HepG2 (cell line): ENCODE measurements at regions of chr1 and their contacts with region 1.

Region 1: GRCh38 chr1:161201828-161202725 is at the start of gene NDUFS2:
- DNase-seq: peak; percentile 97
- ATAC-seq: peak; percentile 86
- H3K4me3 ChIP-seq: peak within 1 kb of the TSS; percentile 73 to 85 (median 80)
- H3K27ac ChIP-seq: peak within 1 kb of the TSS; percentile 70
- H3K4me1 ChIP-seq: peaks cover 78% of the 10 kb centered on the region
- H3K27me3 ChIP-seq: no peaks in the 10 kb centered on the region; a peak in 1 of 5 replicates
- CTCF ChIP-seq: no peak; the same call in none of the 2 replicates
- EP300 ChIP-seq: no peak
- POLR2A ChIP-seq: peak; percentile 80 to 85
- RAD21 ChIP-seq: 0 out of 2 replicates have a peak, but pooled peaks have one; percentile 30
- total RNA-seq, gene NDUFS2: 118 and 129 TPM in 2 replicates

Region 2: DNA sequence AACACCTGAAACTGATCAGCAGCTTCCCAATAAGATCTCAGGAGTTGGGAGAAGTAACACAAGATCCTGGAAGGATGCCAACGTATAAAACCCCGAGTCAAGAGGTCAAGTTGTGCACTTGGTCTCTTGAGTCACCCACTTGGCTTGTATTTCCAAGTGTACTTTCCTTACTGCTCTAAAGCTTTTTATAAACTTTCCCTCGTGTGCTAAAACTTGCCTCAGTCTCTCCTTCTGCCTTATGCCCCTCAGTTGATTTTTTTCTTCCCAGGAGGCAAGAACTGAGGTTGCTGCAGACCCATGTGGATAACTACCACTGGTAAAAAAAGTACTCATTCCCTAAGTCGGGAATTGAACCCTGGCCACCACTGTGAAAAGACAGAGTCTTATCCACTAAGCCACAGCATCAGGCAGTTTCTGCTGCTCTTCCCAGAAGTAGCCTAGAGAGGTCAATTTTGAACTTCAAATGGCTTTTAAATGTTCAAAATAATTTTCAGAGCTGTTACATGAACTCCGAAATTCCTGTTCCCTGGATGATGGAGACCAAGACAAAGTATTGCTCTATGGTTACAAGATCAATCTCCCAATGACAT is 276.3 kb before region 1 on chr1:
- CTCF ChIA-PET with region 1: no interaction called
- POLR2A ChIA-PET with region 1: no interaction called
- in situ Hi-C with region 1: no loop called
- intact Hi-C with region 1: no loop called
- DNase-seq: no peak
- ATAC-seq: no peak
- H3K4me3 ChIP-seq: no peak overlapping the region
- H3K27ac ChIP-seq: no peak overlapping the region
- H3K4me1 ChIP-seq: no peaks in the 10 kb centered on the region
- H3K27me3 ChIP-seq: no peaks in the 10 kb centered on the region
- CTCF ChIP-seq: no peak
- EP300 ChIP-seq: no peak
- POLR2A ChIP-seq: no peak
- RAD21 ChIP-seq: no peak

Region 3: DNA sequence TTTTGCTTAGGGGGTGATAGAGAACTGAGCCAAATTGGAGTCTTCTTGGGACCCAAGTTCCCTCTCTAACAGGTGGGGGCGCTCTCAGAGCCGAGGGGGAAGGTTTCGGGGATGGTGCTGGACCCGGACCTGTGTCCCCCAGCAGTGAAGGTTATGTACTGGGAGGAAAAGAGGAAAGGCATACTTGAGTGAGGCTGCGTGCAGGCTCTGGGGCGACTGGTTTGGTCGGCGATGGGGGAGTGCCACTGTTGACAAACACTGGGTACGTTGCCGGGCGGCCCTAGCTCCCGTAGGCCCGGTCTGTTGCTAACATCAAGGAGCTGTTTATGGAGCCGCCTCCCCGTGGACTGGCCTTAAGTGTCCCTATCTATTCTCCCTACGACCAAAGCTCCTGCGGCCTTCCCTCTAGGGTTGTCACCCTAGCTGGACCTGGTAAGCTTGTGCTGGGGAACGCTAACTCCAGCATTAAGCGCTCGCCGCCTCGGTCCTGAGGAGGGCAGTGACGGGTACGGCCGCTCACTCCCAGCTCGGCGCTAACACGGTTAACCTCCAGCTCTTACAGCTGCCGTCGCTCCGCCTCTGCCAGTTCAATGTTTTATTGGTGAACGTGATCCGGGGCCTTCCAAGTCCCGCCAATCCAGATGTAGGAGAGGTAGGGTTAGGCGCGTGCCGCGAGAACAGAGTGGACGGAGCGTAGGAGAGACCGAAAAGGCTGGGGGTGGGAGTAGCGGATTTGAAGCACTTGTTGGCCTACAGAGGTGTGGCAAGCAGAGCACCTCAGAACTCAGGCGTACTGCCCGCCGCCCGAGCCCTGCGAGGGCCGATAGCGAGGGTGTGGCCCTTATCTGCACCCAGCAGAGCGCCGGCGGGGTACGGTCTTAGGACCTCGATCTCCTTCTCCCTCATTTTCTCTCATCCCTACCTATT is 36.1 kb before region 1 on chr1 and contains the start of gene PPOX:
- CTCF ChIA-PET with region 1: no interaction called
- POLR2A ChIA-PET with region 1: interaction called, 15 read pairs
- in situ Hi-C with region 1: no loop called
- intact Hi-C with region 1: no loop called
- DNase-seq: peak; percentile 97
- ATAC-seq: peak; percentile 96
- H3K4me3 ChIP-seq: peak within 1 kb of the TSS; percentile 71 to 88 (median 74)
- H3K27ac ChIP-seq: peak within 1 kb of the TSS; percentile 62
- H3K4me1 ChIP-seq: peaks cover 25% of the 10 kb centered on the region
- H3K27me3 ChIP-seq: no peaks in the 10 kb centered on the region
- CTCF ChIP-seq: peak; percentile 61
- EP300 ChIP-seq: 0 out of 4 replicates have a peak, but pooled peaks of 1 of the 2 experiments have one; percentile 10
- POLR2A ChIP-seq: peak; percentile 69 to 79
- RAD21 ChIP-seq: no peak
- total RNA-seq, gene PPOX: 13.0 and 15.5 TPM in 2 replicates

Region 4: GRCh38 chr1:161216945-161217712 is 15.1 kb after region 1 on chr1:
- CTCF ChIA-PET with region 1: no interaction called
- POLR2A ChIA-PET with region 1: interaction called, 357 read pairs
- in situ Hi-C with region 1: no loop called
- intact Hi-C with region 1: no loop called
- DNase-seq: peak; percentile 59
- ATAC-seq: peak; percentile 17
- H3K4me3 ChIP-seq: peak overlapping the region in 2 of 3 experiments; percentile 31 to 63; a peak in 3 of 6 replicates
- H3K27ac ChIP-seq: peak overlapping the region; percentile 99
- H3K4me1 ChIP-seq: peaks cover 65% of the 10 kb centered on the region
- H3K27me3 ChIP-seq: no peaks in the 10 kb centered on the region; a peak in 1 of 5 replicates
- CTCF ChIP-seq: no peak
- EP300 ChIP-seq: 0 out of 4 replicates have a peak, but pooled peaks of 1 of the 2 experiments have one; percentile 16
- POLR2A ChIP-seq: peak in 1 of 2 experiments; percentile 14; a peak in 2 of 4 replicates
- RAD21 ChIP-seq: no peak

Region 5: DNA sequence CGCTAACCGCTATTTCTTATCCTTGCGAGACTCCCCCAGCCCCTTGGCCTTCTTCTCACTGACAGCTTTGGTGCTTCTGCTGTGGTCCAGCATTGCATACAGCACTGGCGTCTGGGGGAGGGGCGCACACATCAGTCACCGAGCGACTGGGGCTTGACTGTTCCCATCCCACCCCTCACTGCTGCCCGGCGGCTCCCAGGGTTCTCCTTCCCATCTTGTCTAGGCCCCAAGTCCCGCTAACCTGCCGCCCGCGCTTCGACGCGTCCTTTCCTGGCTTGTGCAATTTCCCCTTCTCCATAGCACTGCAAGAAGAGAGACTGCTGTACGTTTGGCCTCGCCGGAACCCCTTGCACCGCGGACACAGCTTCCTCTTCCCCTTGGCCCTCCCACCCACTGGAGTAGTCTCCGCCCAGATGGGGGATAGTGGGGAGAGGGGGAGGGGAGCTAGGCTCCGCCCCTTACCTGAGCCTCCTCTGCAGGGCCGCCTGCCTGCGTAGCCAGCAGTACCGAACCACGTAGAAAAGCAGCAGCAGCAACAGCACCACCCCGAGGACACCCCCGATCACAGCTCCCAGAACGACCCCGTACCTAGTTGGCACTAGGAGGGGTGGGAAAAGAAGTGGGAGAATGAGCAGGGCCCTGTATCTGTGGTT is 103.9 kb after region 1 on chr1:
- CTCF ChIA-PET with region 1: no interaction called
- POLR2A ChIA-PET with region 1: interaction called, 12 read pairs
- in situ Hi-C with region 1: no loop called
- intact Hi-C with region 1: no loop called
- DNase-seq: peak; percentile 47
- ATAC-seq: peak; percentile 83
- H3K4me3 ChIP-seq: peak overlapping the region; percentile 45 to 73 (median 63); a peak in 5 of 6 replicates
- H3K27ac ChIP-seq: peak overlapping the region; percentile 33
- H3K4me1 ChIP-seq: peaks cover 67% of the 10 kb centered on the region
- H3K27me3 ChIP-seq: no peaks in the 10 kb centered on the region
- CTCF ChIP-seq: peak; percentile 57
- EP300 ChIP-seq: no peak
- POLR2A ChIP-seq: peak in 1 of 2 experiments; percentile 62; a peak in 1 of 4 replicates
- RAD21 ChIP-seq: no peak

Region 6: DNA sequence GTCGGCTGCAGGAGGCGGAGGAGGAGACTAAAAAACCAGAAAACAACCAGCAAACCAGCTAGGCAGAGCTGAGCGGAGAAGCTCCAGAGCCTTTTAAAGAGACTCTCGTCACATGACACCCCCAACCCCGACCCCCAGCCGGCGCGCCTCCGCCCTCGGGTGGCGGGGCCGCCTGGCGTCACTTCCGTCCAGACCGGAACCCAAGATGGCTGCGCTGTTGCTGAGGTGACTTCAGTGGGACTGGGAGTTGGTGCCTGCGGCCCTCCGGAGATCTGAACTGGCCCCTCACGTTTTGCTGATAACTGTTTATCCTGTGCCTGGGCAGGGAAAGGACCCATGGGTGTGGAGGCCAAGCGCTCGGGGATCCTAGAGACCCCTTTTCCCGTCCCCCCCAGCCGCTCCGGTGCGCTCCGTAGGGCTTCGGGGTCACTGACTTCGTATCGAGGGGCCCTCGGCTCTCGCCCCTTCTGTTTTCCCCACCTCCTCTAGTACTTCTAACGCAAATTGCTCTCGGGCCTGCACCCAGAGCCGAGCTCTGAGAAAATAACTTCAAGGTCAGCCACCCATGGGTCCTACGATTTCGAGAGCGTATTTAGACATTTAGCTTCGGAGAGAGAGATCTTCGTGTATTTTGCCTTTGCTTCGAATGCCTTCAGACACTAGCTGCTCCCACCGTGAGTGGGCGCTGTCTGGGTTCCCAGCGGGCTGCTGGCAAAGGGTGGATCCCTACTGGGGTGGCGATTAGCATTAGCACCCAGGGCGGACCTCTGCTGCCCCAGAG is 112.3 kb after region 1 on chr1 and contains the start of gene SDHC:
- CTCF ChIA-PET with region 1: no interaction called
- POLR2A ChIA-PET with region 1: interaction called, 24 read pairs
- in situ Hi-C with region 1: no loop called
- intact Hi-C with region 1: no loop called
- DNase-seq: peak; percentile 87
- ATAC-seq: peak; percentile 94
- H3K4me3 ChIP-seq: peak within 1 kb of the TSS; percentile 78 to 92 (median 79)
- H3K27ac ChIP-seq: peak within 1 kb of the TSS; percentile 95
- H3K4me1 ChIP-seq: peaks cover 76% of the 10 kb centered on the region
- H3K27me3 ChIP-seq: no peaks in the 10 kb centered on the region; a peak in 1 of 5 replicates
- CTCF ChIP-seq: peak; percentile 73
- EP300 ChIP-seq: no peak
- POLR2A ChIP-seq: peak; percentile 92 to 96
- RAD21 ChIP-seq: no peak
- total RNA-seq, gene SDHC: 27.1 and 85.0 TPM in 2 replicates

Region 7: DNA sequence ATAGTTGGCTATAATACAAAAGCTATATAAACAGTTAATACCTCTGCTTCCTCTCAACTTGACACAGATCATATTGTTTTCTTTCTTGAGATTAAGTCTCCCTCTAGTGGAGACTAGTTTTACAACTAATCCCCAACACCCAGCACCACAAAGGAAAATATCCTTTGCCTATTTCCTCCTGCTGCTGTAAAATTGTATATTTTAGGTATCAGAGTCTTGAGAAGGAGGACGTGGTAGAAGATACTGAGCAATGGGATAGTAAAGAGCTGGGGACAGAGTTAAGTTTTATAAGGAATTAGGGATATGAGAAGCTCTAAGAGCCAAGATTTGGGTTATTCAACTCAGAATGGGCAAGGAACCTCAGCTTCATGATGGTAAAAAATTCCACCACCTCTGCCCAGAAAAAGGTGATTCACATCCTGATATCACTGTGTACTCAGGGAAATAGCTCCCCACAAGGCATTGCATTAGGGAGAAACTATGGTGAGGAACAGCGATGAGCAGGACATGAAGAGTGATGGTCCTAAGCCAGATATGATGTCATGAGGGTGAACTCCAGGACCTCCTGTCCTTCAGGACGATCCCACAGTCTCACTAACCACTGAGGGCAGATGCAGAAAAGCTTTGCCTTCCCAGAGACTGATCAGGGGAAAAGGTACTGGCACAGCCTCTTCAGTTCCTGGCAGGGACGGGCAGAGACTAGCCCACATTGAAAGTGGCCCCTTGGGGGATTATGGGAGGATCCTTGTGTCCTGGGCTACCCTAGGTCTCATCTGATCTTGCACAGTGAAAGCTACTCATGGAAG is 180.3 kb after region 1 on chr1:
- CTCF ChIA-PET with region 1: no interaction called
- POLR2A ChIA-PET with region 1: no interaction called
- in situ Hi-C with region 1: loop called (anchors 5 kb)
- intact Hi-C with region 1: no loop called
- DNase-seq: peak; percentile 48
- ATAC-seq: peak; percentile 83
- H3K4me3 ChIP-seq: no peak overlapping the region
- H3K27ac ChIP-seq: no peak overlapping the region
- H3K4me1 ChIP-seq: peaks cover 25% of the 10 kb centered on the region
- H3K27me3 ChIP-seq: no peaks in the 10 kb centered on the region
- CTCF ChIP-seq: peak; percentile 69
- EP300 ChIP-seq: no peak
- POLR2A ChIP-seq: no peak
- RAD21 ChIP-seq: peak; percentile 52; the same call in 1 of the 2 replicates

Region 8: DNA sequence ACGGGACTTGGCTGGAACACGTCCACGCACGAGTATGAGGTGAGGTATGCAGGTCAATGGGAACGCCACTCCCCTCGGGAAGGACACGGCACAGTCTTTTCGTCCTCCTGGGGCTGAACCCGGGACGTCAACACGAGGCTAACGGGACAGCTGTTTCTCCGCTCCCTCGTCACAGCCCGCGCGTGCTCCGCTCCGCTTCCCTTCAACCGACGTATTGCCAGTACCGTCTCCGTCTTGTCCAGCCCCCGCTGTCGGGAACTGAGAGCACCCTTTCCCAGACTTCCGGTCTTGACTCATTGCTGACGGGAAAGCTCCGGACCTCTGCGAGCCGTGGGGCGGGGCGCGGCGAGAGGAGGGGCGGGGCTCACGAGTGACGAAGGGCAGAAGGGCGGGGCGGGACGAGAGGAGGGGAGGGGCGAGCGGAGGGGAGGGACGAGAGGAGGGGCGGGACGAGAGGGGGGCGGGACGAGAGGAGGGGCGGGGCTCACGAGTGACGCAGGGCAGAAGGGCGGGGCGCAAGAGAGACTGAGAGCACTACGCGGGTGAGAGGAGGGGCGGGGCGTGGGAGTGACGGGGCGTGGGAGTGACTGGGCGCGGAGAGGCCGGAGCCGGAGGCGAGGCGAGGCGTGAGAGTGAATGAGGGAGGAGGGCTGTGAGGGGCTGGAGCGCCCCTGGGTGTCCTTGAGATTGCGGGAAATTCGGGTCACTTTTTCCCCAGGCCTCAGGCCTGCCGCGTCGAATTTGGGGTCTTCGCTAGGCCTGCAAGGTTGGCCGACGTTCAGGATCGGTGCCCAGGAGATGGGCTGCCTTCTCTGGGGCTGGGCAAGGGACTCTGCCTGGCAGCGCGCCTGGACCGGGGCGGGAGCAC is 187.8 kb after region 1 on chr1:
- CTCF ChIA-PET with region 1: no interaction called
- POLR2A ChIA-PET with region 1: interaction called, 14 read pairs
- in situ Hi-C with region 1: no loop called
- intact Hi-C with region 1: no loop called
- DNase-seq: peak; percentile 91
- ATAC-seq: peak; percentile 92
- H3K4me3 ChIP-seq: peak overlapping the region; percentile 66 to 97 (median 80)
- H3K27ac ChIP-seq: peak overlapping the region; percentile 74
- H3K4me1 ChIP-seq: peaks cover 50% of the 10 kb centered on the region
- H3K27me3 ChIP-seq: no peaks in the 10 kb centered on the region; a peak in 1 of 5 replicates
- CTCF ChIP-seq: 0 out of 2 replicates have a peak, but pooled peaks have one; percentile 5
- EP300 ChIP-seq: no peak; a peak in 1 of 4 replicates
- POLR2A ChIP-seq: peak; percentile 93 to 95
- RAD21 ChIP-seq: peak; percentile 14; the same call in 1 of the 2 replicates